ENCODE measurements at regions of chr6 and their contacts with region 1.

Region 1: GRCh38 chr6:127879685-127880084 is 21.2 kb downstream of the THEMIS start:
- DNase-seq: no peak
- H3K4me3 ChIP-seq: no peak overlapping the region
- H3K4me3 Mint-ChIP-seq: peak overlapping the region in 7 of 8 donors; percentile 43 to 87 (median 61)
- H3K27ac ChIP-seq: no peak overlapping the region
- H3K27ac Mint-ChIP-seq: peak overlapping the region; percentile 36 to 87 (median 81)
- H3K4me1 ChIP-seq: peaks cover 89% of the 10 kb centered on the region
- H3K4me1 Mint-ChIP-seq: peaks cover 52 to 77% (median 66%) of the 10 kb centered on the region in 4 donors
- H3K27me3 ChIP-seq: no peaks in the 10 kb centered on the region
- H3K27me3 Mint-ChIP-seq: no peaks in the 10 kb centered on the region

Region 2: DNA sequence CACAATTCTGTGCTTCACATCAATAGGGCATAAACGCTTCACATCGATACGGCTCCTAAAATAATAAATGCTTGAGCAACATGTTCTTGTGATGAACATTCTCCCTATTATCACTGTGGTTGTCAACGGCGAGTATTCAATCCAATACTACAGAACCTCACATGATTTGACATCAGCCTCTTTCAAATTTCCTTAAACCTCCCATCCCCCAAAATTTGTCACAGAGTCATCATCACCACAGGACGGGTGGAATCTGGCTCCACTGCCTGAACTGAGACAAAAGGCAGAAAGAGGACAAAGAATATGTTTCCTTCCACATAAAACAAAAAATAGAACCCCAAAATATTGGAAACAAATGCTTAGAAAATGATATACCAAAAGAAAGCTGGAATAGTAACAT is 13.9 kb after region 1 on chr6:
- CTCF ChIA-PET with region 1: interaction called, 3 read pairs
- POLR2A ChIA-PET with region 1: interaction called, 9 read pairs
- intact Hi-C with region 1: loop called (anchors 2 kb)
- DNase-seq: peak in 1 of 5 donors; percentile 51
- H3K4me3 ChIP-seq: no peak overlapping the region
- H3K4me3 Mint-ChIP-seq: peak overlapping the region; percentile 71 to 89 (median 78)
- H3K27ac ChIP-seq: peak overlapping the region; percentile 45
- H3K27ac Mint-ChIP-seq: peak overlapping the region; percentile 69 to 97 (median 86)
- H3K4me1 ChIP-seq: peaks cover 79% of the 10 kb centered on the region
- H3K4me1 Mint-ChIP-seq: peaks cover 36 to 62% (median 54%) of the 10 kb centered on the region in 4 donors
- H3K27me3 ChIP-seq: no peaks in the 10 kb centered on the region
- H3K27me3 Mint-ChIP-seq: no peaks in the 10 kb centered on the region